H1 (cell line): ENCODE measurements at regions of chr1 and their contacts with region 1.

Region 1: GRCh38 chr1:153626922-153627796 is at the start of gene S100A13:
- DNase-seq: peak; percentile 92 to 94
- H3K4me3 ChIP-seq: peak within 1 kb of the TSS; percentile 45 to 77 (median 72)
- H3K27ac ChIP-seq: peak within 1 kb of the TSS; percentile 59
- H3K4me1 ChIP-seq: peaks cover 0 to 13% (median 7%) of the 10 kb centered on the region in 4 experiments; a peak in 6 of 7 replicates
- H3K27me3 ChIP-seq: no peaks in the 10 kb centered on the region
- CTCF ChIP-seq: peak; percentile 86 to 94 (median 90)
- EP300 ChIP-seq: no peak
- POLR2A ChIP-seq: peak; percentile 94 to 98
- RAD21 ChIP-seq: peak; percentile 67 to 78
- total RNA-seq, gene S100A13: 63.6 and 65.3 TPM in 2 replicates

Region 2: DNA sequence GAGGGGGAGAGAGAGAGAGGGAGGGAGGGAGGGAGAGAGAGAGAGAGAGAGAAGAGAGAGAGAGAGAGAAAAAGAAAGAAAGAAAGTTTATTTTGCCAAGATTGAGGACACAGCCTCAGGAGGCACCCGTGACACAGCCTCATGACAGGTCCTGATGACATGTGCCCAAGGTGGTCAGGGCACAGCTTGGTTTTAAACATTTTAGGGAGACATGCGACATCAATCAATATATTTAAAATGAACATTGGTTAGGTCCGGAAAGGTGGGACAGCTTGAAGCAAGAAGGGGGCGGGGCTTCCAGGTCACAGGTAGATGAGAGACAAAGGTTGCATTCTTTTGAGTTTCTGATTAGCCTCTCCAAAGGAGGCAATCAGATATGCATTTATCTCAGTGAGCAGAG is 106.9 kb before region 1 on chr1:
- CTCF ChIA-PET with region 1: interaction called, 13 read pairs
- POLR2A ChIA-PET with region 1: interaction called, 5 read pairs
- DNase-seq: no peak
- H3K4me3 ChIP-seq: no peak overlapping the region
- H3K27ac ChIP-seq: no peak overlapping the region
- H3K4me1 ChIP-seq: peaks cover 3 to 11% (median 5%) of the 10 kb centered on the region in 4 experiments; a peak in 6 of 7 replicates
- H3K27me3 ChIP-seq: peaks cover 0 to 14% (median 8%) of the 10 kb centered on the region in 4 experiments; a peak in 4 of 7 replicates
- CTCF ChIP-seq: no peak
- EP300 ChIP-seq: no peak
- POLR2A ChIP-seq: no peak
- RAD21 ChIP-seq: no peak

Region 3: DNA sequence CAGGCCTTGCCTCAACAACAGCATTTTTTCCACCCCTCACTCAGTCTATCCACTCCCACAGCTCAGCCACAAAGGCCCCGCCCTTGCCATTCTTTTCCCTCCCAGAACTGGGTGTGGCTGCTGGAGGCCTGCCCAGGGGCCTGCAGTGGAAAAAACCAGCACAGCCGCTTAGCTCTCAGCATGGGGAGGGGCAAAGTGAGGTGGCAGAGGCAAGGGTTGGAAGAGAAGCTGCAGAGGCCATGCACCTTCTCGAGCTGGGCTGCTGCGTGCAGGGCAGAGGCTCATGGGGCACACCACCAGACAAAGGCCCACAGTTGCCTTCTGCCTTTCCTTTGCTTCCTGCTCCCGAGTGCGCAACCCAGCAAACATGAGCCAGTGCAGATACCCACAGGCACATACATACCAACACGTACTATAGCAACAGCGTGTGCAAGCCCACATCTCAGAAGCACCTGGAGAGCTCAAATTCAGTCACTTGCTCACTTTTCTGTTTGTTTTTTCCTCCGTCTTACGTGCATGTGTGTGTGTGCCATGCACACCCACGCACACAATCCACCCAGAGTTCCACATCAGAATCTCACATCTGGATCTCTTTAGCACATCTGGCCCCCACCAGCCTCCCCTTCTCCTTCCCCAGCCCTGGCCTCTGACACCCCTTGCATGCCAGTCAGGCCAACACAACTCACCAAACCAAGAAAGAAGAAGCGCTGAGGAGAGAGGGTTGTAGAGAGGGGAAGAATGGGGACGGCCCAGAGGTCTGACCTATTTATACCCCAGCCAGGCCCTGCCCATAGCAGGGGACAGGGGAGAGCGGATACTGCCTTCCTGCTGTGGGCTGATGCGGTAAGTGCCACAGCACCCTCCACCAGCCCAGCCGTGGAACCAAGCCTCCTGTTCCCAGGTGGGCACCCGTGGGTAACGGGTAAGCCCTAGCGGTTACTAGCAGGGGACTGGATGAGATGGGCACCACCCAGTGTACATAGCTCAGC is 81.8 kb before region 1 on chr1 and contains the start of gene S100A4:
- CTCF ChIA-PET with region 1: interaction called, 39 read pairs
- POLR2A ChIA-PET with region 1: interaction called, 3 read pairs
- DNase-seq: peak in 1 of 2 experiments; percentile 87
- H3K4me3 ChIP-seq: peak within 1 kb of the TSS in 1 of 4 experiments; percentile 32; a peak in 2 of 8 replicates
- H3K27ac ChIP-seq: peak within 1 kb of the TSS; percentile 55
- H3K4me1 ChIP-seq: peaks cover 4 to 35% (median 21%) of the 10 kb centered on the region in 4 experiments
- H3K27me3 ChIP-seq: no peaks in the 10 kb centered on the region; a peak in 2 of 7 replicates
- CTCF ChIP-seq: no peak
- EP300 ChIP-seq: 0 out of 3 replicates have a peak, but pooled peaks of 1 of the 2 experiments have one; percentile 31
- POLR2A ChIP-seq: peak in 1 of 2 experiments; percentile 34; a peak in 1 of 3 replicates
- RAD21 ChIP-seq: no peak
- total RNA-seq, gene S100A4: 36.3 and 39.6 TPM in 2 replicates

Region 4: DNA sequence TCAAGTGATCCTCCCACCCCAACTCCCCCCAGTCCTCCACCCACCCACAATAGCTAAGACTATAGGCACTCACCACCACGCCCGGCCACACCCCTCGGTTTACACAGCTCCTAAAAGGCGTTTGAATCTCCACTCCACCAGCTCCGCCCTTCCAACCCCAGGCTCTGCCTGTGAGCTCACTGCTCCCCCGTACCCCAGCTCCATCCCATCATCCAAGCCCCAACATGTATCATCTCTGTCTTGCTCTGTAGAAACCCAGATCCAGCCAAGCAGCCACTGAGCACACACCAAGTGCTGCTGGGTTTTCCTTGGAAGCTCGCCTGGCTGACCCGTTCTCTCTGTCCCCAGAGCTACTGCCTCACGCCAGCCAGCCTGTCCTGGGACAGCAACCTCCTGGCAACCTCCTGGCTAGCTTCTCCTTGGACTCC is 49.5 kb before region 1 on chr1:
- CTCF ChIA-PET with region 1: interaction called, 115 read pairs
- POLR2A ChIA-PET with region 1: interaction called, 20 read pairs
- DNase-seq: no peak
- H3K4me3 ChIP-seq: no peak overlapping the region
- H3K27ac ChIP-seq: no peak overlapping the region
- H3K4me1 ChIP-seq: peaks cover 0 to 3% (median 0%) of the 10 kb centered on the region in 4 experiments; a peak in 2 of 7 replicates
- H3K27me3 ChIP-seq: no peaks in the 10 kb centered on the region
- CTCF ChIP-seq: no peak
- EP300 ChIP-seq: no peak
- POLR2A ChIP-seq: no peak
- RAD21 ChIP-seq: no peak

Region 5: DNA sequence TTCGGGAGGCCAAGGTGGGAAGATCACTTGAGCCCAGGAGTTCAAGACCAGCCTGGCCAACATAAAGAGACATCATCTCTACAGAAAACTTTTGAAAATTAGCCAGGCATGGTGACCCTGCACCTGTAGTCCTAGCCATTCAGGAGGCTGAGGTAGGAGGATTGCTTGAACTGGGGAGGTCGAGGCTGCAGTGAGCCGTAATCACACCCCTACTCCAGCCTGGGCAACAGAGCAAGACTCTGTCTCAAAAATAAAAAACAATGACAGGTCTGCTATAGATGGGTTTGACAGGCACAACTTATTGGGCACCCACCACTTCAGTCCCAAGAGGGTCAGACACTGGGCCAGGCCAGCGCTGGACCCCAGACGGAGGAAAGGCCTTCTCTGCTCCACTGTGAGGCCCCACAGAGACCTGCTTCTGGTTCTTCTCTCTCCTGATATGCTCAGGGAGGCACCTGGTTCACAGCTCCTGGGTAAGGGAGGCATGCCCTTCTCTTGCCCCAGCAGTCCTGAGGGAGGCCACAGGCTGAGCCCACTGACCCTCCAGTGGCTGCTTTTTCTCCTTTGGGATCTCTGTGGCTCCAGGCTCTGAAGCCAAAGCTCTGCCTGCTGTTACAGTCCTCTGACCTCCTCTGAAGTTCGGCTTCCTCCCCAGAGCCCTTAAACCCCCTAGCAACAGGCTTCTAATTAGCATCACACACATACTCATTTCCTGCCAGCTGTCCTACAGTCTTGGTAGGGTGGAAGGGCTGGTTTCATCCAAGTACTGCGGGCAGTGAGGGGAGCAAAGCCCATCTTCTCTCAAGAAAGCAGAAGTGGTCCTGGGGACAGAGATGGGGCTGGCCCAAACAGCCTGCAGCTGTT is 28.6 kb before region 1 on chr1:
- CTCF ChIA-PET with region 1: interaction called, 16 read pairs
- POLR2A ChIA-PET with region 1: interaction called, 20 read pairs
- DNase-seq: peak; percentile 53 to 63
- H3K4me3 ChIP-seq: no peak overlapping the region
- H3K27ac ChIP-seq: no peak overlapping the region
- H3K4me1 ChIP-seq: peaks cover 3 to 10% (median 5%) of the 10 kb centered on the region in 4 experiments; a peak in 4 of 7 replicates
- H3K27me3 ChIP-seq: no peaks in the 10 kb centered on the region
- CTCF ChIP-seq: no peak
- EP300 ChIP-seq: peak in 1 of 2 experiments; percentile 80; a peak in 1 of 3 replicates
- POLR2A ChIP-seq: peak in 1 of 2 experiments; percentile 59; a peak in 2 of 3 replicates
- RAD21 ChIP-seq: 0 out of 4 replicates have a peak, but pooled peaks of 1 of the 2 experiments have one; percentile 8

Region 6: DNA sequence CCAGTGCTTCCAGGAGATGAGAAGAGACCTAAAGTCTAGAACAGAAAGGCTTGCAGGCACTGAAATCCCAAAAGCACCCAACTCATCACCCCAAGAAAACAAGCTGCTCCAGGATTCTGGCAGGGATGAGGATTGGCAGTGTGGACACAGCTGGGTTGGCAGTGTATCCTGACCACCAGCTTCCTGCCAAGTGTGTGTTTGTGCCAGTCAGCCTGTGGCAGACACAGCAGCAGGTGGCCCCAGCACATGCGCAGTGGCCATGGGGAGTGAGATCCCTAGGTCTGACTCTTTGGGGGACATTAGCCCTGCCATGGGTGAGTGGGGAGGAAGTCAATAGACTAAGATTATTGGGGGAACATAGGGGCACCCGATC is 22.7 kb after region 1 on chr1:
- CTCF ChIA-PET with region 1: interaction called, 13 read pairs
- POLR2A ChIA-PET with region 1: interaction called, 42 read pairs
- DNase-seq: no peak
- H3K4me3 ChIP-seq: no peak overlapping the region
- H3K27ac ChIP-seq: no peak overlapping the region
- H3K4me1 ChIP-seq: peaks cover 0 to 3% (median 0%) of the 10 kb centered on the region in 4 experiments; a peak in 1 of 7 replicates
- H3K27me3 ChIP-seq: no peaks in the 10 kb centered on the region
- CTCF ChIP-seq: no peak
- EP300 ChIP-seq: no peak
- POLR2A ChIP-seq: no peak
- RAD21 ChIP-seq: no peak

Region 7: DNA sequence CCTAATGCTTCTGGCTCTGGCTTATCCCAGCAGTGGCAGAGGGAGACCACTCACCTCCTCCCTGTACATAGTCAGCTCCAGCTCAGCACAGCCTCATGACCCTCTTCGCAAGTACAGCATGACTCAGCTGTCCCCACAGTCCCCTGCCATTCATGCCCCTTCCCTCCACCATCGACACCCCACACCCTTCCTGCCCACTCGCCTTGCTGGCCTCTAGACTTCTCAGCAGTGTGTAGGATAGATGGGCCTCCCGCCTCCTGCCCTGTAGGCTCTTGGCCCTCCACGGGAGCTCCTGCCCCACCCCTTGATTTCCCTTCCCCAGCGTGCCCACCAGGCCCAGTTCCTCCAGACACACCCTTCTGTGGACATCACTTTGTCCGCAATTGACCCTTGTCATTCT is 61.1 kb after region 1 on chr1:
- CTCF ChIA-PET with region 1: no interaction called
- POLR2A ChIA-PET with region 1: no interaction called
- DNase-seq: no peak
- H3K4me3 ChIP-seq: no peak overlapping the region
- H3K27ac ChIP-seq: no peak overlapping the region
- H3K4me1 ChIP-seq: no peaks in the 10 kb centered on the region
- H3K27me3 ChIP-seq: no peaks in the 10 kb centered on the region
- CTCF ChIP-seq: no peak
- EP300 ChIP-seq: no peak
- POLR2A ChIP-seq: no peak
- RAD21 ChIP-seq: no peak

Region 8: GRCh38 chr1:153805042-153805745 is 178.0 kb after region 1 on chr1:
- CTCF ChIA-PET with region 1: no interaction called
- POLR2A ChIA-PET with region 1: no interaction called
- DNase-seq: no peak
- H3K4me3 ChIP-seq: no peak overlapping the region
- H3K27ac ChIP-seq: no peak overlapping the region
- H3K4me1 ChIP-seq: no peaks in the 10 kb centered on the region
- H3K27me3 ChIP-seq: no peaks in the 10 kb centered on the region
- CTCF ChIP-seq: no peak
- EP300 ChIP-seq: no peak
- POLR2A ChIP-seq: no peak
- RAD21 ChIP-seq: no peak